ENCODE measurements at regions of chr1 and their contacts with region 1.

Region 1: DNA sequence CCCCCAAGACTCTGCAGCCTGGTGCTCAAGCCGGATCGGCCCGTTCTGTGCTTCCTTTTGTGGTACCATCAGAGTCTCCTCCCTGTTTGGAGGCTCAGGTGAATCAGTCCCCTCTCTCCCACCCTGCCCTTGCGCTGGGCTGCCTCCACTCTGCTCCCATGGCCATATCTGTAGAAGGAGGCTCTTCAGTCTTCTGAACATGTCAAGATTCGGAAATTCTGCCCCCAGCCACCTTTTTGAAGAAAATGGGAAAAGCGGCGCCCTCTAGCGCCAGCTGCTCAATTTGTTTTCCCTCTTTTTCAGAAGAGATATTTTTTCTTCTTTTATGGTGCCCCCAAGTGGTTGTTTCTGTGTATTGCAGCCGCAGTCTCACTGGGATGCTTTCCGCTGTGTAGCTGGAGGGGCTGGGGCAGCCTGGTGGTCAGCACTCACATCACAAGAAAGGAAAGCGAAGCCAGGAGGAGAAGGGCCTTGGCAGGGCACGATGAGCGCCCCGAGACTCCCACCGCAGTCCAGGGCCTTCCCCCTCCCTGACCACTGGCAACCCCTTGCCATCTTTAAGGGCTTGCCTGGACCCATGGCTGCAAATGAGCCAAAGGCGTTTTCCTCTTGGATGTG is 58.4 kb upstream of the CACNA1E start:
- DNase-seq: peak; percentile 70 to 73
- ATAC-seq: peak; percentile 80 to 93
- H3K4me3 ChIP-seq: peak overlapping the region; percentile 28; the same call in 1 of the 3 replicates
- H3K27ac ChIP-seq: no peak overlapping the region
- H3K4me1 ChIP-seq: no peaks in the 10 kb centered on the region
- CTCF ChIP-seq: peak; percentile 100
- EP300 ChIP-seq: no peak
- POLR2A ChIP-seq: no peak
- RAD21 ChIP-seq: peak; percentile 92 to 97

Region 2: DNA sequence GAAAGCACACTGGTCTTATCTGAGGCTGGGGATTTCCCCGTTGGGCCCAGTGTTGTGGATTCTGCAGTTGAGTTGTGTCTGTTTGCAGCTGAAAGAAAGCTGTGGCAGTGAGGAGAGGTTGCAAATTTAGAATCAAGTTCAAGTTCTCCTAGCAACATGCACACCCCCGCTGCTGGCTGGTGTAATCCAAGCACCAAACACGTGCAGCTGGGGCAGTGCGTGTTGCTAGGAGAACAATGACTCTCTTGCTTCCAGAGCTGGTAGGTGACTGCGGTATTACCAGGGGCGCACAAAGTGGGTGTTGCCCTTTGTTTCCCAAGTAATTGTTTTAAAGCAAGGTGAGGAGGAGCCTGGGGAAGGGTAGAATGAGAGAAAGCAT is 244.9 kb before region 1 on chr1:
- CTCF ChIA-PET with region 1: interaction called, 188 read pairs
- POLR2A ChIA-PET with region 1: no interaction called
- DNase-seq: no peak
- ATAC-seq: no peak
- H3K4me3 ChIP-seq: no peak overlapping the region
- H3K27ac ChIP-seq: no peak overlapping the region
- H3K4me1 ChIP-seq: no peaks in the 10 kb centered on the region
- CTCF ChIP-seq: no peak
- EP300 ChIP-seq: no peak
- POLR2A ChIP-seq: no peak
- RAD21 ChIP-seq: no peak

Region 3: GRCh38 chr1:181485287-181486097 is 60.6 kb after region 1 on chr1:
- CTCF ChIA-PET with region 1: no interaction called
- POLR2A ChIA-PET with region 1: no interaction called
- DNase-seq: no peak
- ATAC-seq: peak in 1 of 2 experiments; percentile 32; a peak in 2 of 6 replicates
- H3K4me3 ChIP-seq: no peak overlapping the region
- H3K27ac ChIP-seq: no peak overlapping the region
- H3K4me1 ChIP-seq: no peaks in the 10 kb centered on the region
- CTCF ChIP-seq: no peak
- EP300 ChIP-seq: no peak
- POLR2A ChIP-seq: no peak
- RAD21 ChIP-seq: no peak